ENCODE measurements at regions of chr3 and their contacts with region 1.

Region 1: DNA sequence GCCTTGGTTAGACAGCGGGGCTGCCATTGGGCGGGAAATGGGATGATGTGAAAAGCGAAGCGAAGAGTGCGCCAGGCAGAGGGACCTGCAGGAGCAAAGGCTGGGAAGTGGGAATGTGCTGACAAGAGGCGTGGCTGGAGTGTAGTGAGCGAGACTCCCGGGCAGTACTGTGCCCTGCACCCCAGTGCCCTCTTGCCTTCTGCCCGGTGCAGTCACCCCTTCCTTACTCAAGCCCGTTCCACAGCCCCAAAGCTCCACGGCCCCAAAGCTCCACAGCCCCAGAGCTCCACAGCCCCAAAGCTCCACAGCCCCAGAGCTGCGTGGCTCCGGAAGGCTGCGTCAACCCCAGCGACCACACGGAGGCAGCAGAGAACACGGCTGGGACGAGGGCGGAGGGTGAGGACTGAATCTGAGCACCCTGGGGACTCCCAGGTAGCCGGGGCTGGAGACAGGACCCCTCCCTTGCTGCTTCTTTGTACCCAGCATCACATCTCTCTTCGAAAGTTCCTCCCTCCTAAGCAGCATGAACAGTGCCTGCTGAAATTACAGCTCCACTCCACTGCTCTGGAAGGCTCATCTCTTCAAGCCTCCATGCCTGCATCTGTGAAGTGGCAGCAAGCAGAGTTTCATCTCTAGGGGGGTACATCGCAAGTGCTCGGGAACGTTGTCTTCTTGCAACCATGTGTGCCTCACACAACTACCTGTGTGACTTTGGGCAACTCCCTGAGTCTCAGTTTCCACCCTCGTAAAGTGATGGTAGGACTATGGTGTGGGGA is 108.9 kb downstream of the FBLN2 start:
- DNase-seq: peak in 1 of 2 experiments; percentile 86
- H3K4me3 ChIP-seq: no peak overlapping the region; a peak in 1 of 8 replicates
- H3K27ac ChIP-seq: no peak overlapping the region
- H3K4me1 ChIP-seq: peaks cover 0 to 8% (median 6%) of the 10 kb centered on the region in 4 experiments; a peak in 5 of 7 replicates
- H3K27me3 ChIP-seq: peaks cover 1 to 31% (median 27%) of the 10 kb centered on the region in 4 experiments
- CTCF ChIP-seq: peak in 2 of 3 experiments; percentile 95 to 97; a peak in 3 of 4 replicates
- EP300 ChIP-seq: no peak
- POLR2A ChIP-seq: no peak
- RAD21 ChIP-seq: peak; percentile 95 to 96

Region 2: GRCh38 chr3:13559764-13560525 is 97.9 kb before region 1 on chr3:
- CTCF ChIA-PET with region 1: no interaction called
- POLR2A ChIA-PET with region 1: no interaction called
- DNase-seq: no peak
- H3K4me3 ChIP-seq: no peak overlapping the region
- H3K27ac ChIP-seq: no peak overlapping the region
- H3K4me1 ChIP-seq: peaks cover 0 to 12% (median 4%) of the 10 kb centered on the region in 4 experiments; a peak in 5 of 7 replicates
- H3K27me3 ChIP-seq: no peaks in the 10 kb centered on the region
- CTCF ChIP-seq: no peak
- EP300 ChIP-seq: no peak
- POLR2A ChIP-seq: no peak
- RAD21 ChIP-seq: no peak

Region 3: GRCh38 chr3:13687517-13687943 is 29.7 kb after region 1 on chr3:
- CTCF ChIA-PET with region 1: interaction called, 58 read pairs
- POLR2A ChIA-PET with region 1: interaction called, 3 read pairs
- DNase-seq: no peak
- H3K4me3 ChIP-seq: no peak overlapping the region
- H3K27ac ChIP-seq: no peak overlapping the region
- H3K4me1 ChIP-seq: peaks cover 2 to 15% (median 8%) of the 10 kb centered on the region in 4 experiments; a peak in 6 of 7 replicates
- H3K27me3 ChIP-seq: peaks cover 0 to 2% (median under 1%) of the 10 kb centered on the region in 4 experiments; a peak in 3 of 7 replicates
- CTCF ChIP-seq: no peak
- EP300 ChIP-seq: no peak
- POLR2A ChIP-seq: no peak
- RAD21 ChIP-seq: no peak

Region 4: DNA sequence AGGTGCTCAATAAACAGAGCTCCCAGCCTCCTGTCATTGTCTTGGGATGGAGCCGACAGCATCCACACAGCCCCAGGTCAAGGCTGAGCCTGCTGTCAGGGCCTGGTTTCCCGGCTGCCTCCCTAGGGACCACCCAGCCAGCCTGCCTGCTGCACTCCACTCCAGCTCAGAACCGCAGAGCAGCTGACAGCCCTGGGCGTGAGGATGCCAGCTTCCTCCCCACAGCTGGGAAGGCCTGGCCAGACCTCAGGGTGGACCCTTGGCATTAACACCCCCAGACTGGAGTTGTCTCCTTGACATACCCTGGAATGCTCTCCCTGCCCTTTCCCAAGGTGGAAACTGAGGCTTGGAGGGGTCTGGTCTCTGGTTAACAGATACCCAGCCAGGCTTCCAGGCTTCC is 110.0 kb after region 1 on chr3:
- CTCF ChIA-PET with region 1: interaction called, 17 read pairs
- POLR2A ChIA-PET with region 1: interaction called, 3 read pairs
- DNase-seq: no peak
- H3K4me3 ChIP-seq: no peak overlapping the region
- H3K27ac ChIP-seq: no peak overlapping the region
- H3K4me1 ChIP-seq: peaks cover 0 to 10% (median 4%) of the 10 kb centered on the region in 4 experiments; a peak in 5 of 7 replicates
- H3K27me3 ChIP-seq: no peaks in the 10 kb centered on the region
- CTCF ChIP-seq: no peak
- EP300 ChIP-seq: no peak
- POLR2A ChIP-seq: no peak
- RAD21 ChIP-seq: no peak

Region 5: DNA sequence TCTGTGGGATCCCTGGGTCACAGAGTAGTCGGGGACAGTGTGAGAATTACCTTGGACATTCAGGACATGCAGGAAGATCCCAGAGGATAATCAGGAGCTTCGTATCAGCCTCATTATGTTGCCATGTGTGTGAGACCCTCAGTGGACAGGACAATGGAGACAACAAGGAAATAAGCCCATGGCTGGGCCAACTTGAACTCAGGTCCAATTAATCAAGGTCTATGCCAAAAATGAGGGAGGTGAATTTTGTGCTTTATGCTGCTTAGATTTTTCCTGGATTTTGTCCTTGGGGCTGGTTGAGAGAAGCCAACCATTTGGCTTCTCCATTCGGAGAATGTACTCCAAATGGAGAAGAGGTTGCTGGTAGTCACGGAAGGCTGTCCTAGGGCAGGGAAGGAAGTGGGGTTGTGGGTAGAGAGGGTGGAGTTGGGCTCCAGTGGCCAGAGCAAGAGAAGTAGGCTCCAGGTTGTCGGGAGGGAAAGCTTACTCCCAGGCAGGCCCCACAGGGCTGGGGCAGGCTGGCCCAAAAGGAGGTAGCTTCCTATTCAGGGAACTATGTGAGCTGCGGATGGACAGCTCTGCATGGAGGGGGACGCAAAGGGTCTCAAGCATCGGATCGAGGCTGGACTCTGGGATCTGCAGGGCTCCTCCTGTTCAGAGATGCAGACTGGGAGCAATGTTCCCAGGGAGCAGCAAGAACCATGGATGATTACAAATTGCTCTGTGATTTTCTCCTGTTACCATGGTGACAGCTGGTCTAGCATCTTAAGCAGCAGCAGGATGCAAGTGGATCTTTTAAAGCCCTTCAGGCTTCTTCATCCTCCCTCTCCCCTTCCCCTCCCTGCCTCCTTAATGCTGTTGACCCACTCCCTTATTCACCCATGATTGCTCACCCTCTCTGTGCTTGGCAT is 130.9 kb after region 1 on chr3:
- CTCF ChIA-PET with region 1: interaction called, 17 read pairs
- POLR2A ChIA-PET with region 1: no interaction called
- DNase-seq: no peak
- H3K4me3 ChIP-seq: no peak overlapping the region
- H3K27ac ChIP-seq: no peak overlapping the region
- H3K4me1 ChIP-seq: peaks cover 0 to 20% (median 9%) of the 10 kb centered on the region in 4 experiments; a peak in 5 of 7 replicates
- H3K27me3 ChIP-seq: peaks cover 0 to 3% (median 1%) of the 10 kb centered on the region in 4 experiments; a peak in 1 of 7 replicates
- CTCF ChIP-seq: no peak
- EP300 ChIP-seq: no peak
- POLR2A ChIP-seq: no peak
- RAD21 ChIP-seq: no peak

Region 6: GRCh38 chr3:13850158-13850945 is 192.5 kb after region 1 on chr3:
- CTCF ChIA-PET with region 1: interaction called, 11 read pairs
- POLR2A ChIA-PET with region 1: no interaction called
- DNase-seq: peak in 1 of 2 experiments; percentile 68
- H3K4me3 ChIP-seq: no peak overlapping the region
- H3K27ac ChIP-seq: no peak overlapping the region
- H3K4me1 ChIP-seq: peaks cover 0 to 19% (median 4%) of the 10 kb centered on the region in 4 experiments; a peak in 2 of 7 replicates
- H3K27me3 ChIP-seq: no peaks in the 10 kb centered on the region
- CTCF ChIP-seq: no peak
- EP300 ChIP-seq: no peak
- POLR2A ChIP-seq: no peak
- RAD21 ChIP-seq: no peak